Activated CD4-positive, alpha-beta T cell treated with anti-CD3 and anti-CD28 coated beads for 36 hours (primary cell): ENCODE measurements at regions of chr19 and their contacts with region 1.

Region 1: DNA sequence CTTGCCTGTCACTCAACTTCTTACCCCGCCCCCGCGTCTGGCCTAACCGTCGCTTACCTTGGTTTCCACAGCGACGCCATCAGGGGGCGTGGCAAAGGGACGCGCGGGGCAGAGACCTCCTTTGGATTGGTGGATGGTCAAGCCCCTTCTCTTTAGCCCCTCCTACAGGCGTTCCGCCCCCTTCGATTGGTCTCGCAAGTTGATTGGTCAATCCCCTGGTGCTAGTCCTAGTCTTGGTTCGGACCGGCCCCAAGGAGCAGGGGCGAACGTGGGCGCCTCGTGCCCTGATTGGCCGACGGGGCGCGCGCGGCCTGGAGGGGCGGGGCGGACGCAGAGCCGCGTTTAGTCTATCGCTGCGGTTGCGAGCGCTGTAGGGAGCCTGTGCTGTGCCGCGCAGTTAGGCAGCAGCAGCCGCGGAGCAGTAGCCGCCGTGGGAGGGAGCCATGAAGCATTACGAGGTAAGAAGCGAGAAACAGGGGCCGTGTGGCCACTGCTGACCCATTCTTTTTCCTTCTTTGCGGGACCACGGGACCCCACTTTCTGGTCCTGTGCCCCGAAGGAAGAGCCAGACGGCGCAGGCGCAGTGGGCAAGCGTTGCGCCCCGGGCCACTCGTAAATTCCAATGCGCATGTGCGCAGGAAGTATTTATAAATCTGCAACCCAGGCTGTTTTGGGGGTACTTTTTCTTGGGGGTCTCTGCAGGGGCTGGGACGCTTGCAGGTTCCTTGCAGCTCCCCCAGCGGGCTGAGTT is at the start of gene TECR:
- DNase-seq: peak; percentile 100
- ATAC-seq: peak; percentile 98
- H3K4me3 Mint-ChIP-seq: peak within 1 kb of the TSS; percentile 83
- H3K27ac Mint-ChIP-seq: peak within 1 kb of the TSS; percentile 90
- H3K4me1 Mint-ChIP-seq: peaks cover 37% of the 10 kb centered on the region
- H3K27me3 Mint-ChIP-seq: no peaks in the 10 kb centered on the region
- total RNA-seq, gene TECR: 106 to 145 TPM

Region 2: DNA sequence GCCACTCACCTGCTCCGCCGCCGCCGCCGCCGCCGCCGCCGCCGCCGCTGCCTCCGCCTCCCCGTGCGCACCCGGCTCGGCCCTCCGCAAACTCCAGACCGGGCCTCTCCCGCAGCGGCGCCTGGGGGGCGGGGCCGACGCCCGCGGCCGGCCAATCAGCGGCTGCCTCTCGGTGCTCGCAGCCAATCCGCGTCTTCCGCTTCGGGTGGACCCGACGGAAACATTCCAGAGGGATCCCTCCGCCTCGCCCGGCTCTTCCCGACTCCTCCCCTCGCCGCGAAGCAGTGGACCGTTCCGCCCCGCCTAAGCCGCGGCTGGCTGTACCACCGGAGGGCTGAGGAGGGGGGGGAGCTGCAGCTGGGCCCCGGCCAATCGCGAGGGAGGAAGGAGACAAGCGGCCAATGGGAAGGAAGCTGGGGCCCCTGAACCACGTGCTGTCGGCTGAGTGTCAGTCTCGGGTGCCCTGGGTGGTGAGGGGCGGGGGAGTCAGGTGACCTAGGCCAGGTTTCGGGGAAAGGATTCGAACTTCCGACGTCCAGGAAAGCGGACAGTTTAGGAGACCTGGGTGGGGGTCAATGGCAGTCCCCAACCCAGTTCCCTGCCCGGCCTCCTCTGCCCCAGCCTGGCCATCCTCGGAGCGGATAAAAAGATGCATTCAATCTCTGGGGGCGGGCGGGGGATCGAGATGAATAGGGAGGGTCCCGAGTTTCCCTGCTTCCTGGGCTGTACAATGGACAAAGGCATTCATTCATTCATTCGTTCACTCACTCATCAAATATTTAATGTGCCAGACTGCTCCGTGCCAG is 33.2 kb before region 1 on chr19 and contains the start of gene GIPC1:
- CTCF ChIA-PET with region 1: no interaction called
- POLR2A ChIA-PET with region 1: no interaction called
- intact Hi-C with region 1: loop called in 1 of 2 experiments (anchors 1 kb)
- DNase-seq: peak; percentile 89
- ATAC-seq: peak; percentile 94
- H3K4me3 Mint-ChIP-seq: peak within 1 kb of the TSS; percentile 80
- H3K27ac Mint-ChIP-seq: peak within 1 kb of the TSS; percentile 74
- H3K4me1 Mint-ChIP-seq: peaks cover 21% of the 10 kb centered on the region
- H3K27me3 Mint-ChIP-seq: no peaks in the 10 kb centered on the region
- total RNA-seq, gene GIPC1: 19.3 to 25.7 TPM

Region 3: GRCh38 chr19:14563989-14564651 is 34.7 kb after region 1 on chr19:
- CTCF ChIA-PET with region 1: no interaction called
- POLR2A ChIA-PET with region 1: no interaction called
- intact Hi-C with region 1: loop called in 1 of 2 experiments (anchors 1 kb)
- DNase-seq: peak; percentile 88
- ATAC-seq: peak; percentile 89
- H3K4me3 Mint-ChIP-seq: no peak overlapping the region
- H3K27ac Mint-ChIP-seq: no peak overlapping the region
- H3K4me1 Mint-ChIP-seq: peaks cover 24% of the 10 kb centered on the region
- H3K27me3 Mint-ChIP-seq: no peaks in the 10 kb centered on the region

Region 4: DNA sequence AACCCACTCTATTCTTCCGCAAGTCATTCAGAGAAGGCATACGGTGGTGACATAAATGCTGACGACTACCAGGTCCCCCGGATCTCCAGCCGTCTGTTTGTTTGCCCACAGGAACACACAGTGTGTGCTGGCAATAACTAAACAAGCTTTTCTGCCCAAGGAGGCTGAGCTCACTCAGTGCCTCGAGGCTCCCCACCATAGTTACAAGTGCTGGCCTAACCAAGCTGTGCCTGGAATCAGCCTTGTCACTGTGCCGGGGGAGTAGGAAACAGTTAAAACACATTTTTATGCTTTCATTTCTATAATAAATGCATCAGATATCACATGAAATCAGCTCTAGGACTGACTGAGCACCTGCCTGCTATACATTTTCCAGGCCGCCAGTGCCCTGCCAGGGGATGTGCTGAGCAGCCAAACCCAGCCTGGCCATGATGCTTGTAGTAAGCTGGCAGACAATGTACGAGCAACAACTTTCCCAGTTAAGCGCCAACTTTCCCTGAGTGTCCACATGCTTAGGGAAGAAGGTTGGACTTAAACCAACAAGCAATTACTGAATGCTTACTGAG is 774.8 kb after region 1 on chr19:
- CTCF ChIA-PET with region 1: no interaction called
- POLR2A ChIA-PET with region 1: no interaction called
- intact Hi-C with region 1: loop called in 1 of 2 experiments (anchors 10 kb)
- DNase-seq: peak; percentile 76
- ATAC-seq: peak; percentile 65
- H3K4me3 Mint-ChIP-seq: peak overlapping the region; percentile 52
- H3K27ac Mint-ChIP-seq: peak overlapping the region; percentile 95
- H3K4me1 Mint-ChIP-seq: peaks cover 81% of the 10 kb centered on the region
- H3K27me3 Mint-ChIP-seq: no peaks in the 10 kb centered on the region